Posterior vena cava (tissue), 2 donors: ENCODE measurements at regions of chr6 and their contacts with region 1.

Region 1: GRCh38 chr6:149834513-149835481 is 29.4 kb downstream of the LRP11 start:
- DNase-seq: no peak

Region 2: GRCh38 chr6:149815788-149816187 is 19.0 kb before region 1 on chr6:
- intact Hi-C with region 1: loop called in 1 of 2 experiments (anchors 1 kb)
- DNase-seq: no peak

Region 3: GRCh38 chr6:149852180-149852579 is 17.4 kb after region 1 on chr6:
- intact Hi-C with region 1: no loop called
- DNase-seq: no peak

Region 4: GRCh38 chr6:149925974-149926777 is 91.4 kb after region 1 on chr6:
- intact Hi-C with region 1: loop called (anchors 2 kb)
- DNase-seq: peak; percentile 94